ENCODE measurements at regions of chrX and their contacts with region 1.

Region 1: DNA sequence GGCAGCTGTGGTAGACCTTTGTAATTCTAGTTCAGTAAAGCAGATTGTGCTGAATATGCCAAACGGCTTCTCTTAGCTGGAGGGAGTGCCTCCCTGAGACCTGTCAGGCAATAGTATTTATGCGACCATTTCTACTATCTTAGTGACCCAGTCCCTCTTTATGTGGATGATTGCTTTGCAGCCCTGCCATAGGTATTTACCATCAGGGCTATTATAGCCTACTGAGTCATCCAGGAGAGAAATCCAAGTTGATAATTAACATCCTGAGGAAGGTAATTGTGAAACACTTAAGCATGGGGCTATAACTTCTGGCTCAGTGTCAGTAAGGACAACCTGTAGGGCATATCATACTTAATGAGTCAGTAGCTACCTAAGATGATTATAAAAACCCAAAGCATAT is 103.9 kb upstream of the MAOA start:
- DNase-seq: peak; percentile 20
- H3K4me3 ChIP-seq: no peak overlapping the region
- H3K27ac ChIP-seq: peak overlapping the region; percentile 42 to 67 (median 62)
- H3K4me1 ChIP-seq: peaks cover 0 to 12% (median 3%) of the 10 kb centered on the region in 4 donors
- H3K27me3 ChIP-seq: no peaks in the 10 kb centered on the region
- CTCF ChIP-seq: no peak
- EP300 ChIP-seq: no peak
- POLR2A ChIP-seq: no peak

Region 2: GRCh38 chrX:43514820-43515219 is 37.3 kb before region 1 on chrX:
- in situ Hi-C with region 1: no loop called
- intact Hi-C with region 1: no loop called
- DNase-seq: no peak
- H3K4me3 ChIP-seq: no peak overlapping the region
- H3K27ac ChIP-seq: no peak overlapping the region
- H3K4me1 ChIP-seq: no peaks in the 10 kb centered on the region
- H3K27me3 ChIP-seq: no peaks in the 10 kb centered on the region
- CTCF ChIP-seq: no peak
- EP300 ChIP-seq: no peak
- POLR2A ChIP-seq: no peak

Region 3: GRCh38 chrX:43564953-43565352 is 12.8 kb after region 1 on chrX:
- in situ Hi-C with region 1: no loop called
- intact Hi-C with region 1: loop called (anchors 1 kb)
- DNase-seq: no peak
- H3K4me3 ChIP-seq: no peak overlapping the region
- H3K27ac ChIP-seq: no peak overlapping the region
- H3K4me1 ChIP-seq: peaks cover 0 to 3% (median 0%) of the 10 kb centered on the region in 4 donors
- H3K27me3 ChIP-seq: no peaks in the 10 kb centered on the region
- CTCF ChIP-seq: no peak
- EP300 ChIP-seq: no peak
- POLR2A ChIP-seq: no peak